Endothelial cell of umbilical vein (primary cell): ENCODE measurements at regions of chr3 and their contacts with region 1.

Region 1: DNA sequence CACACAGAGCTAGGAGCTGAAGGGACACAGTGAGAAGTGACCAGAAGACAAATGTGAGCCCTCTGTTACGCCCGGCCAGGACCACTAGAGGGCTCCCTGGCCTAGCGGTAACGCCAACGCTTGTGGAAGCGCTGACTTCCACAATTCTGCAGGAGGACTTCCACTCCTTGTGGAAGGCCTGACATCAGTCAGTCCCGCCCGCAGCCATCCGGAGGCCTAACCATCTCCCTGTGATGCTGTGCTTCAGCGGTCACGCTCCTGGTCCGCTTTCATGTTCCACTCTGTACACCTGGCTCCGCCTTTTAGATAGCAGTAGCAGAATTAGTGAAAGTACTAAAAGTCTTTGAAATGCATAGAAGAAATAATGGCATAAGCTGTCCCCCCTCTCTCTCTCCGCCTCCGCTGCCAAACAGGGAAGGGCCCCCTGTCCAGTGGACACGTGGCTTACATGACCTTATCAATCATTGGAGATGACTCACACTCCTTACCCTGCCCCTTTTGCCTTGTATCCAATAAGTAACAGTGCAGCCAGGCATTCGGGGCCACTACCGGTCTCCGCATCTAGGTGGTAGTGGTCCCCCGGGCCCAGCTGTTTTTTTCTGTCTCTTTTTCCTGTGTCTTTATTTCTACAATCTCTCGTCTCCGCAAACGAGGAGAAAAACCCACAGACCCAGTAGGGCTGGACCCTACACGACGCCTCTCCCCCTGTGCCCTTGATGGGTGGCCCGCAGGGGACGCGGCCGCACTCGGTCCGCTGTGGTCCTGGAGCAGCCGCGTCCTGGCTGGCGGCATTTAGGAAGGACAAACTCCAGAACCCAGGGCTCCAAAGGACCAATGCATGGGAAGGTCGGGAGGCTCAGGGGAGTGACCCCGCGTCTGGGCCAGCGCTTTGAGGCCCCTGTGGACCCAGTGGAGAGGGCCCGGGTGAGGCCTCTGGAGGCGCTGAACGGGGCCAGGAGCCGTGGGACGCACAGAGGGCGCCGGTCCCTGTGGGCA is 27.0 kb upstream of the RPL32 start:
- DNase-seq: peak; percentile 83
- H3K4me3 ChIP-seq: peak overlapping the region in 1 of 3 experiments; percentile 4
- H3K27ac ChIP-seq: no peak overlapping the region
- H3K4me1 ChIP-seq: no peaks in the 10 kb centered on the region
- H3K27me3 ChIP-seq: no peaks in the 10 kb centered on the region
- CTCF ChIP-seq: peak; percentile 72 to 90
- POLR2A ChIP-seq: no peak

Region 2: GRCh38 chr3:12810013-12810780 is 58.1 kb before region 1 on chr3:
- CTCF ChIA-PET with region 1: no interaction called
- POLR2A ChIA-PET with region 1: no interaction called
- dilution Hi-C with region 1: no loop called
- intact Hi-C with region 1: no loop called
- DNase-seq: peak; percentile 95
- H3K4me3 ChIP-seq: peak overlapping the region; percentile 40 to 53 (median 46)
- H3K27ac ChIP-seq: no peak overlapping the region
- H3K4me1 ChIP-seq: peaks cover 8% of the 10 kb centered on the region
- H3K27me3 ChIP-seq: no peaks in the 10 kb centered on the region
- CTCF ChIP-seq: peak; percentile 81 to 85
- POLR2A ChIP-seq: no peak

Region 3: GRCh38 chr3:12841149-12841970 is 27.0 kb before region 1 on chr3 and contains the start of gene RPL32:
- CTCF ChIA-PET with region 1: interaction called, 10 read pairs
- POLR2A ChIA-PET with region 1: no interaction called
- dilution Hi-C with region 1: no loop called
- intact Hi-C with region 1: no loop called
- DNase-seq: peak; percentile 97
- H3K4me3 ChIP-seq: peak within 1 kb of the TSS; percentile 88 to 98 (median 91)
- H3K27ac ChIP-seq: peak within 1 kb of the TSS; percentile 95
- H3K4me1 ChIP-seq: peaks cover 26% of the 10 kb centered on the region
- H3K27me3 ChIP-seq: no peaks in the 10 kb centered on the region
- CTCF ChIP-seq: peak; percentile 74 to 87
- POLR2A ChIP-seq: peak; percentile 98
- total RNA-seq, gene RPL32: 1,569 and 1,588 TPM in 2 replicates

Region 4: GRCh38 chr3:12994607-12995388 is 126.5 kb after region 1 on chr3:
- CTCF ChIA-PET with region 1: interaction called, 32 read pairs
- POLR2A ChIA-PET with region 1: no interaction called
- dilution Hi-C with region 1: no loop called
- intact Hi-C with region 1: loop called (anchors 1 kb)
- DNase-seq: peak; percentile 79
- H3K4me3 ChIP-seq: peak overlapping the region; percentile 30 to 49 (median 41)
- H3K27ac ChIP-seq: no peak overlapping the region
- H3K4me1 ChIP-seq: peaks cover 5% of the 10 kb centered on the region
- H3K27me3 ChIP-seq: peaks cover 8 to 22% of the 10 kb centered on the region in 2 experiments
- CTCF ChIP-seq: peak; percentile 95 to 97
- POLR2A ChIP-seq: no peak